ENCODE measurements at regions of chr4 and their contacts with region 1.

Region 1: DNA sequence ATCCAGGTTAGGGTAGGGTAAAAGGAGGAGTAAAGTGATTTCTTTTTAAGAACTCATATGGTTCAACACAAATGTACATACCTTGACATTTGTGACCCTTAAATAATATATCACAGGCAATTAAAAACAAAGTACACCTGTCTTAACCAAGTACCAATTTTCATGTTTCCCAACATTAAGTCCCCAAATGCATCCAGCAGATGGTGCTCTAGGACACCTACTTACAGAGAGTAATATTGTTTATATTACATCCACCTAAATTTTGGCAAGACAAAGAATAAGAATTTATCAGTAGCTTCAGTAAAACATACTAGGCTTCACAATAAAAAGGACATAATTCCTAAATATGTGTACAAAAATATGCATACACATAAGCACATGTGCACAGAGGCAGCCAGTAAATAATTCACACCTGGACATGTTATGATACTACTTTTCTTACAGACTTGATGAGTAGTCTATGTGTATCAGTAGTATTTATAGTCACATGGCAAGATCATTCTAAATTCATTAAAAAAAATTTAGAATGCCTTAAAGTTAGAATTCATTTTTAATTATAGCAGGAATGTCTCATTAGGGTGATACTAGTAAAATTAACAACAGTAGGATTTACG is 219.7 kb downstream of the DCLK2 start:
- DNase-seq: peak; percentile 28 to 83 (median 50)
- H3K4me3 ChIP-seq: no peak overlapping the region
- H3K27ac ChIP-seq: no peak overlapping the region
- H3K4me1 ChIP-seq: peaks cover 0 to 6% of the 10 kb centered on the region in 2 donors
- H3K27me3 ChIP-seq: no peaks in the 10 kb centered on the region
- CTCF ChIP-seq: peak; percentile 29 to 76 (median 59)
- POLR2A ChIP-seq: no peak

Region 2: GRCh38 chr4:150867148-150867547 is 569.2 kb after region 1 on chr4:
- intact Hi-C with region 1: loop called in 1 of 2 experiments (anchors 10 kb)
- DNase-seq: peak in 5 of 7 donors; percentile 32 to 57 (median 48)
- H3K4me3 ChIP-seq: no peak overlapping the region
- H3K27ac ChIP-seq: no peak overlapping the region
- H3K4me1 ChIP-seq: no peaks in the 10 kb centered on the region
- H3K27me3 ChIP-seq: no peaks in the 10 kb centered on the region
- CTCF ChIP-seq: peak; percentile 50 to 86 (median 69)
- POLR2A ChIP-seq: no peak